ENCODE measurements at regions of chrX and their contacts with region 1.

Region 1: DNA sequence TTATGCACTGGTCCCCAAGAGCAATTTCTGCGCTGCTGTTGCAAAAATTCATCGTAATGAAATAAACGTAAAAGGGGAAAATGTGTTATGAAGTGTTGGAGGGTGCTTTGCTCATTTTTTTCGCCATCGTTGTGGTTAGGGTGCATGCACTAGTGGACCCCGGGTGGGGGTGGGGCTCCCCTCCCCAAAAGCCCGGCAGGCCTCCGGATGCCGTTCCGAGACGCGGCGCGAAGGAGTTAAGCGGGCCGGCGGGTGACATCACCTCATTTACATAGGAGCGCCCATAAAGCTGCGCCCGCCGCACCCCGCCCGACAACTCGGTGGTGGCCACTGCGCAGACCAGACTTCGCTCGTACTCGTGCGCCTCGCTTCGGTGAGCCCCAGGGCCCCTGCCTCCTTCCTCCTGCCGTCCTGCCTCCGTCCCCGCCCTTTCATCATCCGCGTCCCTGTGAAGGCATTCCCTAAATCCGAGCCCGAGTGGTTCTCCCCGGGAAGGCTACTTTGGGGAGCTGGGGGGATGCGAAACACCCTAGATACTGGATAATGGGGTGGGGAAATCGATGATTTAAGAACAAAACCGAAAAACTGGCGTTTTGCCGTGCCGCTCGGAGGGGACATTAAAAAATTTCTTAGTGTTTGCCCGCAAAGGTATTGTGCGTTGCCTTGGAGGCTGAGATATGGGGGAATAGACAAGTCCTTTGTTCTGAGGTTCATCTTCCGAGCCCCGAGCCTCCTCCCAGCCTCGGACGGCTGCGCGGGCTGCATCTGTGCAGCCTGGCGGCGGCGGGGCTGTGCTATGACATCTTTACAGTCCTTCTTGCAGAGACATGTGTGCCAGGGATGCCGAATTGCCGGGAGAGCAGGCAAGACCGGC is at the start of gene TMSB4X:
- DNase-seq: peak; percentile 64 to 91 (median 80)
- ATAC-seq: peak; percentile 45 to 48
- H3K4me3 Mint-ChIP-seq: peak within 1 kb of the TSS; percentile 95 to 99 (median 97)
- H3K27ac Mint-ChIP-seq: peak within 1 kb of the TSS; percentile 93 to 98 (median 97)
- H3K4me1 Mint-ChIP-seq: peaks cover 10 to 51% (median 29%) of the 10 kb centered on the region in 4 donors
- H3K27me3 Mint-ChIP-seq: no peaks in the 10 kb centered on the region
- polyA plus RNA-seq, gene TMSB4X: 23,903 to 30,039 (median 28,786) TPM

Region 2: GRCh38 chrX:13005661-13006473 is 30.8 kb after region 1 on chrX:
- POLR2A ChIA-PET with region 1: interaction called, 329 read pairs
- DNase-seq: peak in 2 of 10 donors; percentile 6 to 28
- ATAC-seq: peak; percentile 70
- H3K4me3 Mint-ChIP-seq: peak overlapping the region; percentile 52 to 95 (median 84)
- H3K27ac Mint-ChIP-seq: peak overlapping the region; percentile 90 to 100 (median 96)
- H3K4me1 Mint-ChIP-seq: peaks cover 18 to 77% (median 59%) of the 10 kb centered on the region in 4 donors
- H3K27me3 Mint-ChIP-seq: no peaks in the 10 kb centered on the region

Region 3: DNA sequence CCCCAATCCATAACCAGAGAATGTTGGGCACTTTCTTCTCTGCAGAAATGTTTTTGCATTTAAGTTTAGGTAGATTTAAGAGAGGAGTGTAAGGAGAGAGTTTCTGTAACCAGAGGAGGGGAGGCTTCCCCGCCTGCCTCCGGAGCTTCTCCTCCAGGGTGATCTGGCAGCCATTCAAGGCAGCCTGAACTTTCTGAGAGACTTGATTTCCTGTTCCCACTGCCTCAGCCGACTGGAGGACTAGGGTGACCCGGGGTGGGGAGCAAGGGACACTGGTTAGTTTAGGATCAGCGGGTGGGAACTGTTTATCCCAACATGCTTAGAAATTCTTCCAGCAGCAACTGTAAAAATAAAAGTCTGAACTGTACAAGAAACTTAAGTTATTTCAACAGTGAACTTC is 54.3 kb after region 1 on chrX:
- POLR2A ChIA-PET with region 1: interaction called, 183 read pairs
- DNase-seq: peak in 2 of 10 donors; percentile 6 to 23
- ATAC-seq: peak; percentile 30 to 43
- H3K4me3 Mint-ChIP-seq: peak overlapping the region in 9 of 10 donors; percentile 39 to 80 (median 67)
- H3K27ac Mint-ChIP-seq: peak overlapping the region; percentile 80 to 98 (median 93)
- H3K4me1 Mint-ChIP-seq: peaks cover 27 to 79% (median 65%) of the 10 kb centered on the region in 4 donors
- H3K27me3 Mint-ChIP-seq: no peaks in the 10 kb centered on the region

Region 4: GRCh38 chrX:13051529-13052172 is 76.6 kb after region 1 on chrX:
- POLR2A ChIA-PET with region 1: interaction called, 179 read pairs
- DNase-seq: peak; percentile 21 to 83 (median 58)
- ATAC-seq: peak; percentile 77 to 84
- H3K4me3 Mint-ChIP-seq: peak overlapping the region; percentile 14 to 72 (median 56)
- H3K27ac Mint-ChIP-seq: peak overlapping the region; percentile 90 to 98 (median 94)
- H3K4me1 Mint-ChIP-seq: peaks cover 16 to 84% (median 74%) of the 10 kb centered on the region in 4 donors
- H3K27me3 Mint-ChIP-seq: no peaks in the 10 kb centered on the region

Region 5: DNA sequence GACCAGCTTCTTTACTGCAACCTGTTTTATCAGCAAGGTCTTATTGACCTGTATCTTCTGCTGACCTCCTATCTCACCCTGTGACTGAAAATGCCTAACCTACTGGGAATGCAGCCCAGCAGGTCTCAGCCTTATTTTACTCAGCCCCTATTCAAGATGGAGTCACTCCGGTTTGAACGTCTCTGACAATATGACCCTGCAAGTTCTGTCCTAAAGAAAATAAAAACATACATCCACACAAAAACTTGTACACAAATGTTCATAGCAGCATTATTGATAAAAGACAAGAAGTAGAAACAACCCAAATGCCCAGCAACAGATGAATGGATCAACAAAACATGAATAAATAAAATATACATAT is 128.9 kb after region 1 on chrX:
- POLR2A ChIA-PET with region 1: no interaction called
- DNase-seq: no peak
- ATAC-seq: no peak
- H3K4me3 Mint-ChIP-seq: no peak overlapping the region
- H3K27ac Mint-ChIP-seq: peak overlapping the region in 1 of 10 donors; percentile 12
- H3K4me1 Mint-ChIP-seq: peaks cover 6 to 36% (median 25%) of the 10 kb centered on the region in 4 donors
- H3K27me3 Mint-ChIP-seq: no peaks in the 10 kb centered on the region